Activated CD4-positive, alpha-beta T cell treated with anti-CD3 and anti-CD28 coated beads for 36 hours (primary cell): ENCODE measurements at regions of chr19 and their contacts with region 1.

Region 1: GRCh38 chr19:18340190-18340989 is at the start of gene PGPEP1:
- DNase-seq: peak; percentile 78
- ATAC-seq: peak; percentile 53
- H3K4me3 Mint-ChIP-seq: peak within 1 kb of the TSS; percentile 69
- H3K27ac Mint-ChIP-seq: peak within 1 kb of the TSS; percentile 93
- H3K4me1 Mint-ChIP-seq: peaks cover 19% of the 10 kb centered on the region
- H3K27me3 Mint-ChIP-seq: no peaks in the 10 kb centered on the region
- total RNA-seq, gene PGPEP1: 20.0 to 20.9 TPM

Region 2: GRCh38 chr19:18831524-18832305 is 491.3 kb after region 1 on chr19 and contains the start of gene UPF1:
- CTCF ChIA-PET with region 1: no interaction called
- POLR2A ChIA-PET with region 1: no interaction called
- intact Hi-C with region 1: loop called in 1 of 2 experiments (anchors 5 kb)
- DNase-seq: peak; percentile 98
- ATAC-seq: peak; percentile 82
- H3K4me3 Mint-ChIP-seq: peak within 1 kb of the TSS; percentile 96
- H3K27ac Mint-ChIP-seq: peak within 1 kb of the TSS; percentile 90
- H3K4me1 Mint-ChIP-seq: peaks cover 34% of the 10 kb centered on the region
- H3K27me3 Mint-ChIP-seq: peaks cover 3% of the 10 kb centered on the region
- total RNA-seq, gene UPF1: 72.4 to 74.0 TPM